PC-3 (cell line): ENCODE measurements at regions of chr10 and their contacts with region 1.

Region 1: GRCh38 chr10:3811291-3811870 is 26.4 kb upstream of the KLF6 start:
- DNase-seq: peak; percentile 50
- ATAC-seq: no peak
- H3K4me3 ChIP-seq: no peak overlapping the region
- H3K27ac ChIP-seq: peak overlapping the region; percentile 100
- H3K4me1 ChIP-seq: peaks cover 60% of the 10 kb centered on the region
- H3K27me3 ChIP-seq: no peaks in the 10 kb centered on the region
- CTCF ChIP-seq: no peak

Region 2: GRCh38 chr10:3424110-3424851 is 387.1 kb before region 1 on chr10:
- CTCF ChIA-PET with region 1: no interaction called
- POLR2A ChIA-PET with region 1: no interaction called
- intact Hi-C with region 1: no loop called
- DNase-seq: peak; percentile 61
- ATAC-seq: peak; percentile 72
- H3K4me3 ChIP-seq: peak overlapping the region; percentile 54
- H3K27ac ChIP-seq: peak overlapping the region; percentile 83
- H3K4me1 ChIP-seq: peaks cover 40% of the 10 kb centered on the region
- H3K27me3 ChIP-seq: no peaks in the 10 kb centered on the region
- CTCF ChIP-seq: no peak

Region 3: GRCh38 chr10:3554121-3554522 is 257.3 kb before region 1 on chr10:
- CTCF ChIA-PET with region 1: no interaction called
- POLR2A ChIA-PET with region 1: no interaction called
- intact Hi-C with region 1: no loop called
- DNase-seq: no peak
- ATAC-seq: no peak
- H3K4me3 ChIP-seq: no peak overlapping the region
- H3K27ac ChIP-seq: no peak overlapping the region
- H3K4me1 ChIP-seq: peaks cover 2% of the 10 kb centered on the region
- H3K27me3 ChIP-seq: no peaks in the 10 kb centered on the region
- CTCF ChIP-seq: no peak

Region 4: DNA sequence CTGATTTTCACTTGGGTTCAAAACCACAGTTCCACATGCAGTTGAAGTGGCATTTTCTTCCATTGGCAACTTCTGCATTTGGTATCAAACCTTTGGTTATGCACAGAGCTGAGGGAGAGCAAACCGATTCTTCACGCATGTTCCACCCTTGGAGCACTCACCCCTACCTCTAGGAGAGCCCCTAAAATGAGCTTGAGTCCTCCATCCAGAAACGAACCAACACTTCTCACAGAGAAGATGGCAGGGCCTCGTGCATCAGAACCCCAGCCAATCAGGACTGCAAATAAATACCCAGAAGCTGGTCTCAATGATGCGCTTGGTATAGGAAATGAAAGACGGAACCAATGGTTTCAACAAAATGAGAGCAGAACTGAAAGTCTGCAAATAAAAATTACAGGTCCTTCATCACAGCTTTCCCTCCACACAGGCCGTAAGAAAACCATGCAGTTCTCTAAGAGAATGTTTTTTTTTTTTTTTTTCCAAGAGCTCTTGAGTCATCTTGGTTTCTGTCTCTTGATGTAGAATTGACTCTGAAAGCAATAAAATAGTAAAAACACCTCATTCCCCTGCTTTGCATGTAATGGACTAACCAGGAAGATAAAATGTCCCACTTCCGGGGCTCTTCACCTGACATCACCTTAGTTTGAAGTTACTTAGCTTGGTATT is 50.2 kb before region 1 on chr10:
- CTCF ChIA-PET with region 1: interaction called, 16 read pairs
- POLR2A ChIA-PET with region 1: no interaction called
- intact Hi-C with region 1: no loop called
- DNase-seq: peak; percentile 36
- ATAC-seq: no peak
- H3K4me3 ChIP-seq: no peak overlapping the region
- H3K27ac ChIP-seq: peak overlapping the region; percentile 100
- H3K4me1 ChIP-seq: peaks cover 77% of the 10 kb centered on the region
- H3K27me3 ChIP-seq: no peaks in the 10 kb centered on the region
- CTCF ChIP-seq: no peak

Region 5: GRCh38 chr10:3852147-3852904 is 40.9 kb after region 1 on chr10:
- CTCF ChIA-PET with region 1: interaction called, 6 read pairs
- POLR2A ChIA-PET with region 1: interaction called, 5 read pairs
- intact Hi-C with region 1: loop called (anchors 1 kb)
- DNase-seq: peak; percentile 94
- ATAC-seq: peak; percentile 86
- H3K4me3 ChIP-seq: peak overlapping the region; percentile 5; the same call in 1 of the 2 replicates
- H3K27ac ChIP-seq: peak overlapping the region; percentile 91
- H3K4me1 ChIP-seq: peaks cover 51% of the 10 kb centered on the region
- H3K27me3 ChIP-seq: no peaks in the 10 kb centered on the region
- CTCF ChIP-seq: no peak

Region 6: GRCh38 chr10:4656576-4657182 is 845.3 kb after region 1 on chr10:
- CTCF ChIA-PET with region 1: no interaction called
- POLR2A ChIA-PET with region 1: interaction called, 13 read pairs
- intact Hi-C with region 1: no loop called
- DNase-seq: peak; percentile 64
- ATAC-seq: 0 out of 2 replicates have a peak, but pooled peaks have one; percentile 35
- H3K4me3 ChIP-seq: no peak overlapping the region
- H3K27ac ChIP-seq: peak overlapping the region; percentile 46
- H3K4me1 ChIP-seq: peaks cover 27% of the 10 kb centered on the region
- H3K27me3 ChIP-seq: no peaks in the 10 kb centered on the region
- CTCF ChIP-seq: peak; percentile 77